ENCODE measurements at regions of chr20 and their contacts with region 1.

Region 1: GRCh38 chr20:62121776-62122631 is at the start of gene LSM14B:
- DNase-seq: peak; percentile 86 to 99
- H3K4me3 ChIP-seq: peak within 1 kb of the TSS; percentile 80
- H3K27ac ChIP-seq: peak within 1 kb of the TSS; percentile 95
- H3K4me1 ChIP-seq: peaks cover 15% of the 10 kb centered on the region
- H3K27me3 ChIP-seq: peaks cover 29% of the 10 kb centered on the region
- CTCF ChIP-seq: no peak
- total RNA-seq, gene LSM14B: 61.5 and 67.2 TPM in 2 replicates

Region 2: GRCh38 chr20:62088237-62089127 is 33.5 kb before region 1 on chr20:
- CTCF ChIA-PET with region 1: no interaction called
- POLR2A ChIA-PET with region 1: interaction called, 5 read pairs
- intact Hi-C with region 1: loop called (anchors 2 kb)
- DNase-seq: peak; percentile 62 to 94
- H3K4me3 ChIP-seq: no peak overlapping the region
- H3K27ac ChIP-seq: no peak overlapping the region
- H3K4me1 ChIP-seq: peaks cover 6% of the 10 kb centered on the region
- H3K27me3 ChIP-seq: peaks cover 63% of the 10 kb centered on the region
- CTCF ChIP-seq: no peak

Region 3: GRCh38 chr20:62136283-62137091 is 14.5 kb after region 1 on chr20:
- CTCF ChIA-PET with region 1: no interaction called
- POLR2A ChIA-PET with region 1: no interaction called
- intact Hi-C with region 1: no loop called
- DNase-seq: peak; percentile 64 to 68
- H3K4me3 ChIP-seq: no peak overlapping the region
- H3K27ac ChIP-seq: no peak overlapping the region
- H3K4me1 ChIP-seq: peaks cover 10% of the 10 kb centered on the region
- H3K27me3 ChIP-seq: no peaks in the 10 kb centered on the region
- CTCF ChIP-seq: peak; percentile 92

Region 4: DNA sequence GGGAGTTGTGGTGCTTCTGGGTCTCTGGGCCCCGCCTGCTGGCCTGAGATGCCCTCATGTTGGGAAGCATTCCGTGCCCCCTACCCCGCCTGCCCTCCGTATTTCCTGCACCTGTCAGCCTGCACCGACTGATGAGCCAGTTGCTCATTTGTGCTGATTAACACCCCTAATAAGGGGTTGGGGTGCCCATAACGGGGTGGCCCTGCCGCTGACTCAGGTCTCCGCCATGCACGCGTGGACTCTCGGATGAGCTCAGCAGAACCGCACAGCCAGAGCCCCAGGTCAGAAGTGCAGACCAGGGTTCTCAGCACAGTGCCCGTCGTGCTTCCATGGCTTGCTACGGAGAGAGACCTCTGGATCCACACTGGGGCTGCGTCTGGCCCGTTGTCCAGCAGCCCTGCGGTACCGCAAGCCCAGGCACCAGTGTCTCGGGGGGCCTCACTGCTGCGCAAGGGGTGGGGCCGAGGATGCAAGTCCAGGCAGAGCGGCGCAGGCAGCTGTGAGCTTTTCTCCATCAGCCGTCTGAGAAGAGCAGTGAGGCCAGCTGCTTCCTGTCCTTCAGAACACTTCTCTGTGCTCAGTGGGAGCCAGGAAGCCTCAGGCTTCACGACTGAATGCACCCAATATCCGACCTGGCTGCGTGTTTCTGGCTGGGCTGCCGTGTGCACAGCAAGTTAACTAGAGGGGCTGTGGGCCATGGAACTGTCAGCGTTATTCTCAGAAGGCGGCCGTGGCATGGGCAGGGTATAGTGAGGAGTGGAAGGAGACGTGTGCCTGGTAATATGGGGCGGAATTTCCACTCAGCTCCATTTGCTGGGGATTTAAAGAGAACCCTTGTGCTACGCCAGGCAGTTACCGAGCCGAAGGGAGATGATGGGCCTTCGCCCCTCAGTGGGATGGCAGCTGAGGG is 79.4 kb after region 1 on chr20:
- CTCF ChIA-PET with region 1: no interaction called
- POLR2A ChIA-PET with region 1: no interaction called
- intact Hi-C with region 1: no loop called
- DNase-seq: no peak
- H3K4me3 ChIP-seq: no peak overlapping the region
- H3K27ac ChIP-seq: no peak overlapping the region
- H3K4me1 ChIP-seq: no peaks in the 10 kb centered on the region
- H3K27me3 ChIP-seq: no peaks in the 10 kb centered on the region
- CTCF ChIP-seq: no peak

Measured in PC-9 (cell line).